GM18951 (cell line): ENCODE measurements at regions of chr7 and their contacts with region 1.

Region 1: DNA sequence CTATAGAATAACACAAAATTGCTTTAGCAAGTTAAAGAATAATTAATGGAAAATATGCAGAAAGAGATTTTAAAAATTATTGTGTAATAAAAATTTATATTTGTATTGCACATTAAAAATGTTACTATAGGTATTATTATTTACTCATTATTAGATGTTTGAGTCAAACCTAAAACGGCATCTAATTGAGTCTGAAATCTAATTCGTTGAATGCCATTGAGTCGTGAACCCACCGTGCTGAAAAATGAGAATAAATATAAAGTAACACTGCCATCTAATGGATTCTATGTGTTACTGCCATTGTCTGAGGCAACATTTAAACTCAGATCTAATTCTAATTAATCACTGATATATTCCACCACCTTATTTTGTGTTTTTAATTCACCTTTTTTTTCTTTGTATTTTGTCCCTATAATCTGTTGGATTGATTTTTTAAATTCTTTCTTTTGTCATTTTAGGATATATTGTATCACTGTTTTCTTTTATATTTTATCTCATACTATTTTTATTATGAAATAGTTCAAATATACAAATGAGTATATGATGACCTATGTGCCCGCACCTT is 62.2 kb downstream of the SAMD9 start:
- POLR2A ChIP-seq: no peak

Region 2: GRCh38 chr7:92447345-92448204 is 608.0 kb before region 1 on chr7 and contains the start of gene GATAD1:
- in situ Hi-C with region 1: loop called (anchors 25 kb)
- POLR2A ChIP-seq: peak; percentile 71

Region 3: DNA sequence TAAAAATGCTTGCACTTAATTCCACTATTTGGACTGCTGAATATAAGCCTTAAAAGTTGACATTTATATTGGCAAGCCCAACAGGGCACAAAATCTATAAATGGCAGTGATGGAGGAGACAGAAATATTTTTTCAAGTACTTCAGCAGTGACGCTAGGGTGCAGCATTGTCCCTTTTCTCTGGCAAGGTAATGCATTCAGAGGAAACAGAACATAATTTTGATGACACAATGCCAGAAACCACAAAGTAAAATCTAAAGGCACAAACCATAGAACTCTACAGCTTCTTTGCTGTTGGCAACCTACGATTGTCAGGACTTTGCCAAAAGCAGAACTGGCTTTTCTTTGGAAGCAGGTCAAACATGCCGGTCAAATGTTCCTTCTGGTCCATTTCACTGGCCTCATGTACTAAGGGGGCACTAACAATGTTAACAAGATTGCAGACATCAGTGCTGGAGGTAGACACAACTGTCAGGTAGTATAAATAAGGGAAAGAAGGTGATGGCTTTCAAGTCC is 434.5 kb before region 1 on chr7:
- in situ Hi-C with region 1: loop called (anchors 10 kb)
- POLR2A ChIP-seq: no peak

Region 4: DNA sequence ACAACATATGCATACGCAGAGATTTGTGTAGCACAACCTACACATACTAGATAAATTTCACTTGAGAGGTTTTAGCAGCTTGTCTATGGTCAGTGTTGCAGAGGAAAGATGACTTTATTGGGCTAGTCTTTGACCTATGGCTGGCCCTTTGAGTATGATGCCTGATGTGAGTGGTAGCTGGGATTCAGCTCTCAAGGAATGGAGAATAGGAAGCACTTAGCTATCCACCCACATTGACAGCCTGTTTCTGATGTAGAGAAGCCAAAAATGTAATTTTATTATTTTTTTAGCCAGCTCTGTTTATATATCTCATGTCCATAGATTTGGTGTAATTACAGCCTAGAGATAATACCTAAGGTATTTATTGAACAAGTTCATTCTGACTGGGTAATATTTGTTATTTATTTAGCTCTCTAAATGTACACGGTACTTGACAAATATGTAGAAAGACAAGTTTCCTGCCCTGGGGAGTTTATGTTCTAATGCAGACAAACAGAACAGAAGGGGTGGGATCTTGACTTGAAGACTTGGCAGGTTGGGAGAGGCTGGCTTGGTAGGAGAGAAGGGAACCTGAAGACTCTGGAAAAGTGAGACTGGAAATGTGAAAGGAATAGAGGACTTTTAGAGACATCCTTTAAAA is 121.7 kb before region 1 on chr7:
- in situ Hi-C with region 1: no loop called
- POLR2A ChIP-seq: no peak